ENCODE measurements at regions of chr9 and their contacts with region 1.

Region 1: GRCh38 chr9:121074635-121075385 is at the start of gene CNTRL:
- DNase-seq: peak; percentile 87
- H3K4me3 ChIP-seq: peak within 1 kb of the TSS; percentile 65 to 74
- H3K27ac ChIP-seq: peak within 1 kb of the TSS; percentile 88 to 92
- H3K4me1 ChIP-seq: peaks cover 5% of the 10 kb centered on the region
- H3K27me3 ChIP-seq: no peaks in the 10 kb centered on the region
- CTCF ChIP-seq: peak in 2 of 4 experiments; percentile 3 to 13
- POLR2A ChIP-seq: peak; percentile 47
- total RNA-seq, gene CNTRL: 10.3 to 21.9 TPM

Region 2: DNA sequence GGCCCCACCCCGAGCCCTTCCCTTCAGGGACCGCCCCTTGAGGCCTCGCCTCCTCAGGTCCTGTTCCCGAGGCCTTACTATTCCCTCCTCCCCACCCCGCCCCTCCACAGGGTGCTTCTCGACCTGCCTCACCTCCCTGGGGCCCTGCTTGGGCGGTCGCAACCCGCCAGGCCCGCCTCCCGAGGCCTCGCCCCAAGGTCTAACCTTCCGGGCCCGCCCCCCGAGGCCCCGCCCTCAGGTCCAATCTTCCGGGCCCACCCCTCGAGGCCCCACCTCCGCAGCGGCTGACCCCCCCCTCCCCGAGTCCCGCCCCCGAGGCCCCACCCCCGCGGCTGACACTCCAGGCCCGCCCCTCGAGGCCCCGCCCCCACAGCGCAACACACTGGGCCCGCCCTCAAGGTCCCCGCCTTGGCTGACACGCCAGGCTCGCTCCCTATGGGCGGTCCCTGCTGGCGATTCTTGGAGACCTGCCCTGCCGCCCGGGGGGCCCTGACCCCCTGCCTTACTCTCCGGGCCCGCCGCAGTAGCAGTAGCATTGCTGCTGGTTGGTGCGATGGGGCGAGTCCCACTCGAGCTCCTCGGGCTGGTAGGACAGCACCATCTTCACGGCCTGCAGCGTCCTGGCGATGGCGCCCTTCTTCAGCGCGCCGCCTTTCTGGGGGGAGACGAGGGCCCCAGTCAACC is 206.0 kb before region 1 on chr9:
- intact Hi-C with region 1: loop called (anchors 5 kb)
- DNase-seq: peak; percentile 96
- H3K4me3 ChIP-seq: peak overlapping the region; percentile 36 to 46
- H3K27ac ChIP-seq: peak overlapping the region; percentile 80 to 82
- H3K4me1 ChIP-seq: no peaks in the 10 kb centered on the region
- H3K27me3 ChIP-seq: no peaks in the 10 kb centered on the region
- CTCF ChIP-seq: peak; percentile 19 to 70 (median 64)
- POLR2A ChIP-seq: peak; percentile 74

Region 3: DNA sequence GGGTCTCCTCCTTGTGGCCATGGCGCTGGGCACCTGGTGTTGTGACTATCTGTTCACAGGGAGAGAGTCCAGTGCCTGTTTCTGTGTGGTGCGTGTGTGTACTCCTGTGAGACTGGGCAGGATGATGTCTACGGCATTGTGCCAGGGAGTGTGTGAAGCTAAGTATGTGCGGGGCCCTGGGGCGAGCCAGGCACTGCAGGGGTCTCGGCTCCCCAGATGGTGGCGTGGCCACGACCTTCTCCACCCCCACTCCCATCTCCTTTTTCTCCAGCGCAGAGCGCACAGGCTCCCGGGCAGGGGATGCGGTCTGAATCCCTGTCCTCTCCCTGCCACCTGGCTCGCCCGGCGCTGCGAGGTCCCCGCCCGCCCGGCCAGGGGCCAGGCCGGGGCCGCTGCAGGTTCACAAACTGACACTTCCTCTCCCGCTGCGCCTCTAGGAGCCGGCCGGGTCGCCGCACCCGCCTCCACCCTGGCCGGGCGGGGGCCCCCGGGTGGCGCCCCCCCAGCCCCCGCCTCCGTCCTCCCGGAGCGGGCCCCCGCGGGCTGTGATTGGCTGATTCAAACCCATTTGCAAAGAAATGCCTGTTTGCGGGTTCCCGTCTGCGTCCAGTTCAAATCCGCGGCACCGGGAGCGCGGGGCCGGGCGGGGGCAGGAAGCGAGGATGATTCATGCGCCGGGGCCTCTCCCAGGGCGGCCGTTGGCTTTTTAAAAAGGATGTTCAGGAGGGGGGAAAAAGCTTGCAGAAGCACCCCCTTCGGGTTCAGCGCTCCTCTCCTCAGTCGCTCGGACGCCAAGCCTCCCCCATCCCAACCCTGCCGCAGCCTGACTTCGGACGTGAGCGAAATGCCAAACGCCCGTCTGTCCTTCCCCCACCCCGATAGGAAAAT is 198.6 kb before region 1 on chr9:
- intact Hi-C with region 1: loop called (anchors 5 kb)
- DNase-seq: peak; percentile 64
- H3K4me3 ChIP-seq: peak overlapping the region; percentile 52 to 63
- H3K27ac ChIP-seq: peak overlapping the region; percentile 91 to 92
- H3K4me1 ChIP-seq: no peaks in the 10 kb centered on the region
- H3K27me3 ChIP-seq: no peaks in the 10 kb centered on the region
- CTCF ChIP-seq: peak in 2 of 4 experiments; percentile 2 to 13
- POLR2A ChIP-seq: peak; percentile 36

Region 4: DNA sequence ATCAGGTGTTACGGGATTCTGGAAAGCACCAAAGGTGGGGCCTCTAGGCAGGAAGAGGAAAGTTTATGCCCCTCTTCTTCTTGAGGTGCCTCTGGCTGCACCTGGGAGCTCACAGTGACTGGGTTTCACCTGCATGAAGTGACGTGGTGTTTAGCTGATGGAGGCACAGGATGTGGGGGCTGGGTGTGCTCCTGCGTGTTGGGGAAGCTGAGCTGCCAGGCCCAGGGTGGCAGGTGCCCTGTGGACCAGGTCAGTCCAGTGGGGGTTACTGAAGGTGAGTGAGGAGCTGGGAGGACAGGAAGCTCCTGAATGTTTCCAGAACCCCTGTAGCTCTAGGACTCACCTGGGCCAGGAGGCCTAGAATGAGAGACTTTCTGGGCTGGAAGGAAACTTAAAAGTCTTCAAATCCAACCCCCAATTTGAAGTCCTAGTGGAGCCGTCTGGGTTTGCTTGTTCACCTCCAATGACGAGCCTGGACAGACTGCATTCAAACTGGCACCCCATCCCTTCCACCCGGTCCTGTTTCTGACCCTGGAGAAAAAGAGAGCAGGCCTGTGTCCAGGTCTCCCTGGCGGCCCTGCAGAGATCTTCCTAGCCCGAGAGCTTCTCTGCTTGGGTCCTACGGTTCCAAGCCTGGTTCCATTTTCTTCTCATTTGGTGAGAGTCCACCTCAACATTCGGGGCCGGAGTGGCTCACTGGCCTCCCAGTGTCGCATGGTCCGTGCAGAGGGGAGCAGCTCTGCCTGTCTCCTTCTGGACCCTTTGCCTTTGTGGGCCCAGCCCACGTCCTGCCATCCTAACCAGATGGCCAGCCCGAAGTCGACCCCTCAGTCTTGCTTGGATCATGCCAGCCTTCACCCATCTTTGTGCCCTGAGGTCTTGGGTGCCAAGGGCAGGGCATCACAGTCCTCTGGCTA is 170.5 kb before region 1 on chr9:
- intact Hi-C with region 1: no loop called
- DNase-seq: no peak
- H3K4me3 ChIP-seq: no peak overlapping the region
- H3K27ac ChIP-seq: no peak overlapping the region
- H3K4me1 ChIP-seq: no peaks in the 10 kb centered on the region
- H3K27me3 ChIP-seq: no peaks in the 10 kb centered on the region
- CTCF ChIP-seq: no peak
- POLR2A ChIP-seq: no peak